ENCODE measurements at regions of chr17 and their contacts with region 1.

Region 1: DNA sequence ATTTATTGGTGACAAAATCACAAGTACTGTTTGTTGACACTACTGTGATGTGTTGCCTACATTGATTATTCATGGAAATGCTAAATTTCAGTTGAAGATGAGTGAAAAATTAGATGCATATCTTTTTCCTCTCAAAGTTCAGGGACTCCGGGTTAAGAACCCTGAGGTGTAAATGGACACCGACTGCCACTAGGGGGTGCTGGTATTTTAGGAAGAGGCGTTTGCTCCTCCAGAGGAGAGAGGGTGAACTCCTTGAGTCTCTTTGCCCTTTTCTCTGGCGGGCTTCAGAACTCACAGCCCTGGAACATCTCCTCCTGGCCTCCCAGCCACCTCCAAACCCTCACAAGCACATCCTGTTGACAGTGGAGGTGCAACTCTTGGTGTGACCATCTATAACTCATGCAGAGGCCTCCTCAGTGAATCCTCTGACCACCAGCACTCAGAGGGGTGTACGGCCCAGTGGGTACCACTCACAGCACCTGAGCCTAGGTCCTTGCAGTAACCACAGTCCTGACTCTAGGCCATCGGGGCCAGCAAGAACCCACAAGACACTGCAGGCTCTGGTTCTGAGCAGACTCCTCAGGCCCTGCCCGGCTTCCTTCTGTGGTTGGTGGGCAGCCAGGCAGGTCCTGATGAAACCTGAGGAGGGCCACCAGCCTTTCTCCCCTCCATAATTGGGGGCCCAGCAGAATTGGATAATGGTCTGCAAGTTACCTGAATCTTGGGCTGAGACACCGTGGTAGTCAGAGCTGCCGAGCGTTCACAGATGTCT is 26.2 kb upstream of the PIK3R5 start:
- DNase-seq: peak in 2 of 3 donors; percentile 57 to 78
- ATAC-seq: peak; percentile 58 to 77
- H3K4me3 ChIP-seq: no peak overlapping the region
- H3K27ac ChIP-seq: no peak overlapping the region
- H3K4me1 ChIP-seq: no peaks in the 10 kb centered on the region
- H3K27me3 ChIP-seq: no peaks in the 10 kb centered on the region

Region 2: GRCh38 chr17:9284884-9285283 is 293.2 kb after region 1 on chr17:
- intact Hi-C with region 1: loop called in 3 of 4 experiments (anchors 5 to 10 kb)
- DNase-seq: peak; percentile 48 to 64 (median 58)
- ATAC-seq: peak; percentile 64 to 96
- H3K4me3 ChIP-seq: no peak overlapping the region
- H3K27ac ChIP-seq: no peak overlapping the region
- H3K4me1 ChIP-seq: no peaks in the 10 kb centered on the region
- H3K27me3 ChIP-seq: no peaks in the 10 kb centered on the region

Region 3: DNA sequence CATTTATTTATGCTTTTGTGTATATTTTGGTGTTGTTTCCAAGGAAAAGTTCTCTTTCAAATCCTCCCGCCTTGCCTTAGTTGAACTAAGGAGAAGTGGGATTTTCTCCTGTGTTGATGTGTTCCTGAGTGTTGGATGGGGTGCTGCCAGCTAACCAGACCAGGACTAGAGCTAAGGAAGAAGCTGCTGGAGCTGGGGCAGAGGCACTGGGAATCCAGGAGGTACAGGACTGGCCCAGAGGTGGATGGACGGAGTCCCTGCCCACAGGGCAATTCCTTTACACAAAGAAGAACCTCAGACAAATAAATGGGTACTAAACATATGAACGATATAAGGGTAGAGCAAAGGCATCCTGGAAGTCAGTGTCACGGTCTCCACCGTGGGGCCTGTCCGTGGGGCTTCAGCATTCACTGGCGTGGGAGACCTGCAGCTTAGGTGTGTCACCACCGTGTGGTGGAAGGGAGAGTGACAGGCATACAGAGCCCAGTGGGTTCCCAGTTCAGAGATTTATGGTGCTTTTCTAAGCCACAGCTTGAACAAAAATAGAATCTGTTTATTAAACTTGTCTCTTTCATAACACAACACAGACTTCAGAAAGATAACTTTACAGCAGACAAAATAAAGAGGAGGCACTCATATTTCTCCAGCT is 300.3 kb after region 1 on chr17:
- intact Hi-C with region 1: loop called in 3 of 4 experiments (anchors 5 to 10 kb)
- DNase-seq: peak; percentile 54 to 80 (median 70)
- ATAC-seq: peak; percentile 93
- H3K4me3 ChIP-seq: no peak overlapping the region
- H3K27ac ChIP-seq: no peak overlapping the region
- H3K4me1 ChIP-seq: peaks cover 3% of the 10 kb centered on the region
- H3K27me3 ChIP-seq: no peaks in the 10 kb centered on the region

Measured in right cardiac atrium (tissue), 5 donors.